Right ventricle myocardium superior (tissue), 1 donor: ENCODE measurements at regions of chr10 and their contacts with region 1.

Region 1: GRCh38 chr10:97292097-97292862 is at the start of gene ARHGAP19:
- DNase-seq: peak; percentile 96
- ATAC-seq: peak; percentile 100
- total RNA-seq, gene ARHGAP19: 5.9 TPM

Region 2: DNA sequence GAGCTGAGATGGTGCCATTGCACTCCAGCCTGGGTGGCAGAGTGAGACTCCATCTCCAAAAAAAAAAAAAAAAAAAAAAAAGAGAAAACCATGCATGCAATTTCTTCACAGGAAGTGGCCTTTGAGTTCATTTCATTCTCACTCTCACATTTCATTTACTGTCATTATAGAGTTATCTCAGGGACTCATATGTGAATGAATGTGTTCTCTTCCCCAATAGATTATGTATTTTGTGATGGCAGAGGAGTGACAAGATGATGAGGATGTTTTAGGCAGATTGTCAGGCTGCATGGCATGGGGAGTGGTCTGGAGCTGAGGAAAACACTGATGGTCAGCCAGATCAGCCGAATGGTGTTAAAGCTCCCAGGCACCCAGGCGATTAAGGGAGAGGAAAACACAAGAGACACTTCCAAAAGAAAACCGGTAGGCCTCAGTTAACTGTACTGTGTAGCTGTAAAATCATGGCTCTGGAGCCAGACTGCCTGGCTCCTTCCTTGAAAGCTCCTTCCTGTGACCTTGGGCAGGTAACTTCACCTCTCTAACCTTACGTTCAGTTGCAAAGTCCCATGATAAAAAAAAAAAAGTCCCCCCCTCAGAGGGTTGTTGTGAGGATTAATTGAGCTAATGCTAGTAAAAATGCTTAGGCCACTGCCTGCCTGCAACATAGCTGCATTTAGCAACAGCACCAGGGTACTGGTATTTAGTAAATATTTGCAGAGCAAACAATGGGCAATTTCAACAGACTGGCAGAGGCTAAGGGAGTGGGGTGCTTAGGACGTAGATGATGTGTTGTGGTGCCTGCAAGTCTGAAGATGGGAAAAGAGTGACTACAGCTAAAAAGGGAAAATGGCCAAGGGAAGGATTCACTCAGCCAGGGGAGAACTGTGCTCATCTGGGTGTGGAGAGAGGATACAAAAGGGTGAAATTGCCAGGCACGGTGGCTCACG is 35.3 kb after region 1 on chr10:
- intact Hi-C with region 1: loop called (anchors 5 kb)
- DNase-seq: no peak
- ATAC-seq: no peak